Head of caudate nucleus (tissue), 42 donors: ENCODE measurements at regions of chr12 and their contacts with region 1.

Region 1: DNA sequence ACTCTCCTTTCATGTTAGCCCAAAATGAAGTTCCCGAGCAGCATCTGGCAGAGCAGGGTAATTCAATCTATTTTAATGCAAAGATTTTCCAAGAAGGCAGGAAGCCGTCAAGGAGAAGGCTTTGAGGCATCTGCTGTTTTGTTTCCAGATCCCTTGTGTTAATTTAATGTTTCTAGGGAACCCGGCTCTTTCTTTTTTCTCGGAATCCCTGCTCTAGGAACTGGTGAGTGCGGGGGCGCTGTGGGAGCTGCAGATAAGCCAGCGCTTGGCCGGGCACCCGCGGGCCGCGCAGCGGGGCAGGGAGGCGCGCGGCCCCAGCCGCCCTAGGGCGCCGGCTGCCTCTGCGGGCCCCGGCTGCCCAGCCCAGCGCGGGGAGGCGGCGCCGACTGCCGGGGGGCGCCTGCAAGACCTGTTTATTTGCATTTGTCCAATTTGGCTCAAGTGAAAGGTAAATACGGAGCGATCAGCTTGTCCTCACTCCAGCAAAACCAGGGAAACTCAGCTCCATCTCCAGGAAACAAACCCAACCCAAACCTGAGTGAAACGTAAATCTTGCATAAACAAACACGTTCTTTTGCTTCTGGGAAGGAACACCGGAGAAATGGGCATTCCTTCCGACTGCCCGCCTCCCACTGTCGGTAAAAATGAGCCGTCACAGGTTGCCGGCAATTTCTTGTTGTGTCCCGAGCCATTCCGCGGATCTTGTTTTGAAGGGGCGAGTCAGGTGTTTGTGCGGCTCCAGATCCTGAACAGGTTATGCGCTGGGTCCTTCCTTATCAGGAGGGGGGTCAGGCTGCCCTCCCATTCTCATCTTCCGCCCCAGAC is 65.1 kb downstream of the CRADD start:
- DNase-seq: peak; percentile 55 to 91 (median 80)

Region 2: GRCh38 chr12:93699271-93700145 is 42.8 kb before region 1 on chr12:
- intact Hi-C with region 1: no loop called
- DNase-seq: no peak

Region 3: DNA sequence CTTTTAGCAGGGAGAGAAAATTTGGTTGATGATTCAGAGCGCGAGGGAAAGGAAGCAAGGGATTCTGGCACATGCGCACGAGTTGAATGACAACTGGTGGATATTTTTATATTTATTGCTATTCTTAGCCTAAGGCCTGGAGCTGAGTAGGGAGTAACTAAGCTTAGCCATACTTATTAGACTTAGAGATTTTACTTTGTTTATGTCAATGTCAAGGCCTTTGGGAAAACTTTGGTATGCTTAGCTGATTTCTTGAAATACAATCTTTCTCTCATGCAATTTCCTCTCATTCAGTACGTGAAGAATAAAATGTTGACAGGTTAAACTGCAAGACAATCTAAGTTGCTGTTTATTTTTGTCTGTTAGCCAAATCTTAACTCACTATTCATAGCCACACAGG is 36.0 kb after region 1 on chr12:
- intact Hi-C with region 1: loop called (anchors 5 kb)
- DNase-seq: peak in 39 of 42 donors; percentile 19 to 85 (median 50)

Region 4: DNA sequence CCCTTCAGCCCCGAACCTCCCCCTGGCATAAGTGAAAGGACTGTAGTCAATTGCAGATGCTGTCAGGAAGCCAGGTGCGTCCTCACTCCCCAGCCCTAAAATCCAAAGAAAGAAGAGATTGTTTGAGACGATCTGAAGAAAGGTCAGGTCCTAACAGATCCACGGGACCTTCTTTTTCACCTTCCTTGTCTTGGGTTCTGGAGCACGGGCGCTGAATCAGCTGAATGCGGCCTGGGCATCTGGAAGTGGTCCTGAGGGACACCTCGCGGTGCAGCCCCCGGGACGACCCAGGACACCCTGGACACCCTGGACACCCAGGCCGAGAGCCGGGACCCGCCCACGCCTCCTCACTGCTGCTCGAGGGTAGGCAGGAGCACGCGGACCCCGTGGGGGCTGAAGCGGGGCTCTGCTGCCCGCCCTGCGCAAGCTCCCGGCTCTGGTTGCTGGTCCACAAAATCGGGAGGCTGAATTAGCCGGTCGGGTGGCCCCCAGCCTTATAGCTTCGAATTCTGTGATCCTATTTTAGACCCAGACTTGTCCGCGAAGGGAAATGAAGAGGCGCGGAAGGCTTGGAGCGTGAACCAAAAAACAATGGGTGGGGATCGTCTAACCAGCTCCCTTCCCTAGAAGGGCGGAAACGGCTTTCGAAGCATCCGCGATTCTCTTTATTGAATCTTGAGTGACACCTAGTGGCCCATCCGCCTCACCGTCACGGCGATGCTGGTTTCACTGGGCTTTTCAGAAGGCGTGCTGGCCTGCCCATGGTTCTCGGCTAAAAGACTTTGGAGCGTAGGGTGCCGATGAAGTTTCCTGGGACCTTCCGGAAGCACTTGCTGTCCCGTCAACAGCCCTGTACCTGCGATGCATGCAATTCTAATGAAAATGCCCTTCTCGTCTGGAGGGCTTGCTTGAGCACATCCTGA is 359.7 kb after region 1 on chr12:
- intact Hi-C with region 1: loop called (anchors 10 kb)
- DNase-seq: peak; percentile 71 to 93 (median 85)